ENCODE measurements at regions of chr18 and their contacts with region 1.

Region 1: GRCh38 chr18:25005541-25006403 is 346.2 kb downstream of the ZNF521 start:
- DNase-seq: no peak
- H3K4me3 ChIP-seq: no peak overlapping the region
- H3K27ac ChIP-seq: no peak overlapping the region
- H3K4me1 ChIP-seq: no peaks in the 10 kb centered on the region
- H3K27me3 ChIP-seq: no peaks in the 10 kb centered on the region
- CTCF ChIP-seq: no peak
- POLR2A ChIP-seq: no peak

Region 2: GRCh38 chr18:24704946-24705630 is 300.7 kb before region 1 on chr18:
- intact Hi-C with region 1: no loop called
- DNase-seq: no peak
- H3K4me3 ChIP-seq: no peak overlapping the region
- H3K27ac ChIP-seq: no peak overlapping the region
- H3K4me1 ChIP-seq: peaks cover 10% of the 10 kb centered on the region
- H3K27me3 ChIP-seq: no peaks in the 10 kb centered on the region
- CTCF ChIP-seq: no peak
- POLR2A ChIP-seq: no peak

Region 3: GRCh38 chr18:25033747-25034471 is 28.1 kb after region 1 on chr18:
- intact Hi-C with region 1: no loop called
- DNase-seq: no peak
- H3K4me3 ChIP-seq: no peak overlapping the region
- H3K27ac ChIP-seq: no peak overlapping the region
- H3K4me1 ChIP-seq: no peaks in the 10 kb centered on the region
- H3K27me3 ChIP-seq: no peaks in the 10 kb centered on the region
- CTCF ChIP-seq: no peak
- POLR2A ChIP-seq: no peak

Region 4: DNA sequence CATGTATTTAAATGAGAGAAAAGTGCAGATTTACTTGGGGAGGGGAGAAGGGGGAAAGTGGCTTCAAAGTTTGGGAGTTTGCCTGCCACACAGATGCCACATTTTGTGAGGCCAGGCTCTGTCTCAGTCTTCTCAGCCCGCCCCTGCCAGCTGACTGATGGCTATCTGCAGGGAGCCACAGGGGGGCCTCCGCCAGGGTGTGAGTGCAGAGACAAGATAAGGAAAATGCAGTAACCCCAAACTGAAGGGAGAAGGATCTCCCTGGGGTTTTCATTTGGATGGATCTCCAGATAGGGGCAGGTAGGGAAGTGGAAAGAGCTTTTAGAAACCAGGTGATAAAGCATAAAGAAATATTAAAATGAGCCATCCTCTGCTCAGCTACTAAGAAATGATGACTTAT is 217.4 kb after region 1 on chr18:
- intact Hi-C with region 1: no loop called
- DNase-seq: no peak
- H3K4me3 ChIP-seq: no peak overlapping the region
- H3K27ac ChIP-seq: no peak overlapping the region
- H3K4me1 ChIP-seq: no peaks in the 10 kb centered on the region
- H3K27me3 ChIP-seq: no peaks in the 10 kb centered on the region
- CTCF ChIP-seq: no peak
- POLR2A ChIP-seq: no peak

Region 5: GRCh38 chr18:26677957-26678356 is 1672.2 kb after region 1 on chr18:
- intact Hi-C with region 1: loop called (anchors 5 kb)
- DNase-seq: no peak
- H3K4me3 ChIP-seq: no peak overlapping the region
- H3K27ac ChIP-seq: no peak overlapping the region
- H3K4me1 ChIP-seq: no peaks in the 10 kb centered on the region
- H3K27me3 ChIP-seq: no peaks in the 10 kb centered on the region
- CTCF ChIP-seq: no peak
- POLR2A ChIP-seq: no peak